ENCODE measurements at regions of chr16 and their contacts with region 1.

Region 1: GRCh38 chr16:11706180-11706742 is 36.4 kb downstream of the TXNDC11 start:
- DNase-seq: peak; percentile 90 to 94
- ATAC-seq: peak; percentile 90 to 92
- H3K4me3 ChIP-seq: peak overlapping the region in 1 of 4 donors; percentile 1
- H3K27ac ChIP-seq: peak overlapping the region; percentile 89 to 95 (median 94)
- H3K4me1 ChIP-seq: peaks cover 61 to 64% of the 10 kb centered on the region in 2 donors
- H3K27me3 ChIP-seq: no peaks in the 10 kb centered on the region
- CTCF ChIP-seq: no peak
- POLR2A ChIP-seq: peak; percentile 52 to 75

Region 2: GRCh38 chr16:11675561-11676511 is 30.4 kb before region 1 on chr16:
- in situ Hi-C with region 1: no loop called
- intact Hi-C with region 1: loop called (anchors 1 kb)
- DNase-seq: peak; percentile 95 to 99
- ATAC-seq: peak; percentile 65 to 75
- H3K4me3 ChIP-seq: no peak overlapping the region
- H3K27ac ChIP-seq: peak overlapping the region; percentile 91 to 99 (median 97)
- H3K4me1 ChIP-seq: peaks cover 97 to 98% of the 10 kb centered on the region in 2 donors
- H3K27me3 ChIP-seq: no peaks in the 10 kb centered on the region
- CTCF ChIP-seq: peak in 1 of 5 experiments; percentile 29
- POLR2A ChIP-seq: peak; percentile 56 to 59

Region 3: GRCh38 chr16:11682655-11683096 is 23.6 kb before region 1 on chr16:
- in situ Hi-C with region 1: no loop called
- intact Hi-C with region 1: loop called (anchors 2 kb)
- DNase-seq: no peak
- ATAC-seq: peak; percentile 73 to 74
- H3K4me3 ChIP-seq: no peak overlapping the region
- H3K27ac ChIP-seq: peak overlapping the region; percentile 91 to 99 (median 97)
- H3K4me1 ChIP-seq: peaks cover 68 to 77% of the 10 kb centered on the region in 2 donors
- H3K27me3 ChIP-seq: no peaks in the 10 kb centered on the region
- CTCF ChIP-seq: no peak
- POLR2A ChIP-seq: peak in 1 of 2 donors; percentile 31